ENCODE measurements at regions of chr9 and their contacts with region 1.

Region 1: GRCh38 chr9:19925817-19926503 is 137.1 kb upstream of the SLC24A2 start:
- DNase-seq: peak; percentile 37 to 43
- ATAC-seq: peak; percentile 88 to 96
- H3K4me3 ChIP-seq: peak overlapping the region; percentile 37 to 62 (median 52)
- H3K27ac ChIP-seq: no peak overlapping the region
- H3K4me1 ChIP-seq: peaks cover 0 to 3% of the 10 kb centered on the region in 2 donors
- H3K27me3 ChIP-seq: no peaks in the 10 kb centered on the region
- CTCF ChIP-seq: peak; percentile 86 to 95 (median 90)
- POLR2A ChIP-seq: no peak

Region 2: GRCh38 chr9:20043035-20043434 is 117.1 kb after region 1 on chr9:
- in situ Hi-C with region 1: loop called in 1 of 4 experiments (anchors 25 kb)
- intact Hi-C with region 1: no loop called
- DNase-seq: no peak
- ATAC-seq: no peak
- H3K4me3 ChIP-seq: no peak overlapping the region
- H3K27ac ChIP-seq: no peak overlapping the region
- H3K4me1 ChIP-seq: peaks cover 0 to 3% of the 10 kb centered on the region in 2 donors
- H3K27me3 ChIP-seq: no peaks in the 10 kb centered on the region
- CTCF ChIP-seq: no peak
- POLR2A ChIP-seq: no peak

Region 3: GRCh38 chr9:20941174-20941690 is 1015.3 kb after region 1 on chr9:
- in situ Hi-C with region 1: loop called (anchors 5 to 25 kb)
- intact Hi-C with region 1: loop called (anchors 1 kb)
- DNase-seq: peak; percentile 14 to 18
- ATAC-seq: peak; percentile 87 to 93
- H3K4me3 ChIP-seq: no peak overlapping the region
- H3K27ac ChIP-seq: no peak overlapping the region
- H3K4me1 ChIP-seq: no peaks in the 10 kb centered on the region
- H3K27me3 ChIP-seq: no peaks in the 10 kb centered on the region
- CTCF ChIP-seq: peak; percentile 62 to 87 (median 72)
- POLR2A ChIP-seq: no peak

Measured in gastrocnemius medialis (tissue), 4 donors.